ENCODE measurements at regions of chr12 and their contacts with region 1.

Region 1: DNA sequence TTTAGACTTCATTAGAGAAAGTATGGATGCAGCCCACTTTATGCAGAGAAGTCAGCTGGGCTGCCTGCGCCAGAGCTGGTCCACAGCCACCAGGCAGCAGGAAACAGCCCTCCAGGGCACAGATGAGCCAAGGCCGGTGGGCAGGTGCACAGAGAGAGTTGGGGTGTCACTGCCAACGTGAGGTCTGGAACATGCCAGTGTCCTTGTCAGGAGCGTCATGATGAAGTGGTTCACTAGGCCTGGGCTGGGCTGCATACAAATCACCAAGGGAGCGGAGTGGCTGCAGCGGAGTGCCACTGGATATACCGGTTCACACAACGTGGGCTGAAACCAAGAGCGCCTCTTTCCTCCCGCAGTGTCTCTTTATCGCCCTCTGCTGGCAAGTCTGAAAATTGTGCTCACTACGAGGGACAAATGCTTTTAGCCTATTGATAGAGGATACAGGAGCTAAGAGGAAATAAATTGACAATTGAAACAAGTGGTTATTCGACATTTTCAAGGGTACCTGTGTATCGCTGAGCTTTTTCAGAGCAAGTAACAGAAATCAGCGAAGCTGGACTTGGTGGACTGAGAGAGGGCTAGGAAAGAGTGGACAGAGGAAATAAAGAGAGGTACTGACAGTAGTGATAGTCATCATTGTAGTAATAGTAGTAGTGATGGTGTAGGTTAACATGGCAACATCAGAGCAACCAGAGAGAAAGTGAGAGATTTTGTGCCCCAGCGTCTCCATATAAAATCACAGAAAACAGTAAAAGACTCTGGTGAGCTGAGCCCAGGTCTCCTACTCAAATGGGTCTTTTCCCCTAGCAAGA is 52.0 kb upstream of the ITPR2 start:
- DNase-seq: peak; percentile 85 to 96 (median 89)
- H3K4me3 ChIP-seq: no peak overlapping the region
- H3K27ac ChIP-seq: no peak overlapping the region
- H3K4me1 ChIP-seq: no peaks in the 10 kb centered on the region
- H3K27me3 ChIP-seq: no peaks in the 10 kb centered on the region
- CTCF ChIP-seq: peak; percentile 94 to 98 (median 97)
- POLR2A ChIP-seq: no peak

Region 2: GRCh38 chr12:26853303-26854030 is 31.5 kb before region 1 on chr12:
- intact Hi-C with region 1: loop called in 1 of 2 experiments (anchors 5 kb)
- DNase-seq: peak; percentile 49 to 84 (median 69)
- H3K4me3 ChIP-seq: no peak overlapping the region
- H3K27ac ChIP-seq: no peak overlapping the region
- H3K4me1 ChIP-seq: peaks cover 13 to 32% of the 10 kb centered on the region in 2 donors
- H3K27me3 ChIP-seq: no peaks in the 10 kb centered on the region
- CTCF ChIP-seq: peak; percentile 88 to 95 (median 90)
- POLR2A ChIP-seq: no peak